ENCODE measurements at regions of chr2 and their contacts with region 1.

Region 1: DNA sequence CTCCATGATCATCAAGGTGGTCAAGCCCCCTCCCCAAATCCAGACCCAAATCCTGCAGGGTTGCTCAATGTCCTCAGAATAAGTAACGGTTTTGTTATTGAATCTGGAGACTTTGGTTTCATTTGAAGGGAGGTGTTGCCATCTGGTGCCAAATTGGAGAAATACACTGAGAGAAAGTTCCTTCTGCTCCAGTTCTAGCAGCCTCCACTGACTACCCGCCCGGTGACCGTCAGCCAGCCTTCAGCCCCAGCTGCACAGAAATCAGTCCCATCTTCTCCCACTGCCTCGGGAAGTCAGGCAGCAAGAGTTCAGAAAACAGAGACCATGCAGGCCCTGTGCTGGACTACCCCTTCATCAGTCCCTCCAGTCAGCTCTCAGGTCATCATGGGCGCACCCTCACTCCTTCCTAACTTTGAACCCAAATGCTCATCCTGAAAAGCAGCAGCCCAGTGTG is 38.7 kb downstream of the PKDCC start:
- DNase-seq: peak; percentile 20 to 39
- H3K4me3 ChIP-seq: no peak overlapping the region
- H3K27ac ChIP-seq: no peak overlapping the region
- H3K4me1 ChIP-seq: no peaks in the 10 kb centered on the region
- H3K27me3 ChIP-seq: no peaks in the 10 kb centered on the region
- CTCF ChIP-seq: peak; percentile 54 to 91 (median 72)
- POLR2A ChIP-seq: no peak

Region 2: DNA sequence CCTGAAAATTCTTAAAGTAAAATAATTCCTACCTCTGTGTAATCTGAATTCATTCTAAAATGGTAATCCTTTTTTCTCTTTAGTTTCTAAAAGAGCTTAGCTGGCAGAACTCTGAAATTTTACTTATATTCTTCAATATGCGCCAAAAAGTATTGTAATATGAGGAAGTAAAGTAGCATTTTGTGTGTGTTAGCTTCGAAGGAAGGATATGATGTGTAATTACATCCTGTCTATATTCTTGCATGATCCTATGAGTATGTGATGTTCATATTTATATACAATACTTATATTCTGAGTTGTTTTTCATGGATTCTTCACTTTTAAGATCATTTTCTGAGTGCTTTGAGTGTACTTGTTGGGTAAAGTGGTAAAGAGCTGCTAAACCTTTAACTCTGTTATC is 441.6 kb before region 1 on chr2:
- intact Hi-C with region 1: no loop called
- DNase-seq: no peak
- H3K4me3 ChIP-seq: no peak overlapping the region
- H3K27ac ChIP-seq: no peak overlapping the region
- H3K4me1 ChIP-seq: no peaks in the 10 kb centered on the region
- H3K27me3 ChIP-seq: no peaks in the 10 kb centered on the region
- CTCF ChIP-seq: no peak
- POLR2A ChIP-seq: no peak

Region 3: DNA sequence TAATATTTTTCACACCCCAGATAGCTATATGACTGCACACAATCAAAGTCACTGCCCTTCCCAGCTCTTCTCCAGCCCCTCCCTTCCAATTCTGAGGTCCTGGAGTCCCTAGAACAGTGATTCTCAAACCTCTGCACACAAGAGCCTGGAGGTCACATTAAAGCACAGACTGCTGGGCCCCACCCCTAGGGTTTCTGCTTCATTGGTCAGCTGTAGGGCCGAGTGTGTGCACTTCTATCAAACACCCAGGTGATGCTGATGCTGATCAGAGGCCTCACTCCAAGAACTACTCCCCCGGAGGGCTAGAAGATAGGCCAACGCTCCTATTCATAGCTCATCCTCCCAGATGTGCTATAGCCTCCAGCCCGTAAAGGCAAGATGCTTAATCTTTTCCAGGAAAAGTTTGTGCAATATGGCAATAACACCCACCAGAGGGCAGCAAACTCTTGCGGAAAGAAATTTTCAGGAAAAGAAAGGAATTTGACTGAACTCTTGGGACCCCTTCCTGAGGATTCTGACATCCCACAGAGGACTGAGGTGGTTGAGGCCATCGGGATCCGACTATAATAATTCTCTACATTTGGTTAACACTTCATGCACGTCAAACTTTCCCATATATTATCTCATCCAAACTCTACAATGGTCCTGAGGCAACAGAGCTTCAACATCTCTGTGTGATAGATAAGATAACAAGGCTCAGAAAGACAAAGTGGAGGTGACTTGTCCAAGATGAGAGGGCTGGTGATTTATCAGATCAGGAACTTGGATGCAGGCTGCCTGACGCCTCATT is 232.9 kb before region 1 on chr2:
- intact Hi-C with region 1: loop called (anchors 5 kb)
- DNase-seq: peak; percentile 41 to 42
- H3K4me3 ChIP-seq: no peak overlapping the region
- H3K27ac ChIP-seq: no peak overlapping the region
- H3K4me1 ChIP-seq: no peaks in the 10 kb centered on the region
- H3K27me3 ChIP-seq: no peaks in the 10 kb centered on the region
- CTCF ChIP-seq: peak; percentile 28 to 70 (median 50)
- POLR2A ChIP-seq: no peak

Region 4: DNA sequence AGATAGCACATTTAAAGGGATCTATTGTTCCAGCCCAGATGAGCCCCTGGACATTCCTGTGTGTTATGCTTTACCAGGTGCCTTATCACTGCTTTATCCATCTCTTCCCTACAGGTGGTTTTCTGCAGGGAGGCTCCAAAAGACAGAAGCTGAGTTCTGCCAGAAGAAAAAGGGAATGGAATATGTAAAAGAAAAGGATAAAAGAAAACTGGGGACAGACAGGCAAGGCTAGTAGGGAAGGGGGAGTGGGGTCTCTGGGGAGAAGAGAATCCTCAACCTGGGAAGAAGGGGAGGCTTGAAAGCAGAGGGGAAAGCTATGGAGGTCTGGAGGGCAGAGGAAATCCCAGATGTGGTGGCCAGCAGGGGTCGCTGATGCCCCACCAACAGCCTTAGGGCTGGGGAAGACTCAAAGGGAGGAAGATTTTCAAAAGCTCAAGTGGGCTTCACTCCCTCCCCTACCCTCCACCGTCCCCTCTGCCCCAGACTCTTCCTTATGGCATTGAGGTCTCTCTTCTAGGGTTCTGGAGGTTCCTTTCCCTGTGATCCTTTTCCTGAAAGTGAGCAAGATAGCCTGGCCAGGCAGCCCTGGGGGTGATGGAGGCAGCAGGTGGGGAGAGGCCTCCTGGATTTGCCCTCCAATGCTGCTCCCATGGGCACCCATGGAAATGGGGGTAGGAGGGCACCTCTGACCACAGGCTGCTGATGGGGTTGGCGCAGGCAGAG is 216.8 kb before region 1 on chr2:
- intact Hi-C with region 1: loop called (anchors 2 kb)
- DNase-seq: peak; percentile 66 to 75
- H3K4me3 ChIP-seq: no peak overlapping the region
- H3K27ac ChIP-seq: no peak overlapping the region
- H3K4me1 ChIP-seq: no peaks in the 10 kb centered on the region
- H3K27me3 ChIP-seq: no peaks in the 10 kb centered on the region
- CTCF ChIP-seq: peak; percentile 44 to 92 (median 81)
- POLR2A ChIP-seq: no peak